MCF 10A (cell line): ENCODE measurements at regions of chr5 and their contacts with region 1.

Region 1: DNA sequence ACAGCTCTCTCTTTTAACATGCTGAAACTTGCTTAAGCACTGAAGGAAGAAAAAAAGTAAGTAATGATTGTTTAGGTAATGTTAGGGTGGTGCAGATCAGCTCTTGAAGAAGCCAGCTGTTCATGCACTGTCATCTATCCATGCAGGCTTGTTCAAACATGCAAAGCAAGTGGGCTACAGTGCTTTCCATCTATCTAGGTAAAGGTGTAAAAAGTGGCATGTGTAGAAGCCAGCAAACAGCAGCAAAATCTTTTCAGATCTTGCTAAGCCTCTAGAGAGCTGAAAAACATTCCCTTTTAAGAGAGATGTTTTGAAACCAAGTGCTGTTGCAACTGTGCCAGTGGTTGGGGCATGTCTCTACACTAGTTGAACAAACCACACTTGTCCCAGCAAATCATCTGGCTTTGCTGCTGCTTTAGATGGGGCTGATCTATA is 214.4 kb downstream of the EFNA5 start:
- DNase-seq: peak; percentile 76
- H3K4me3 Mint-ChIP-seq: peak overlapping the region; percentile 6
- H3K27ac Mint-ChIP-seq: peak overlapping the region; percentile 64
- H3K4me1 Mint-ChIP-seq: peaks cover 56% of the 10 kb centered on the region
- H3K27me3 Mint-ChIP-seq: no peaks in the 10 kb centered on the region
- CTCF ChIP-seq: no peak

Region 2: GRCh38 chr5:107389130-107389774 is 67.0 kb before region 1 on chr5:
- CTCF ChIA-PET with region 1: no interaction called
- POLR2A ChIA-PET with region 1: interaction called, 25 read pairs
- intact Hi-C with region 1: no loop called
- DNase-seq: peak; percentile 67
- H3K4me3 Mint-ChIP-seq: no peak overlapping the region
- H3K27ac Mint-ChIP-seq: peak overlapping the region; percentile 75
- H3K4me1 Mint-ChIP-seq: peaks cover 45% of the 10 kb centered on the region
- H3K27me3 Mint-ChIP-seq: no peaks in the 10 kb centered on the region
- CTCF ChIP-seq: no peak

Region 3: GRCh38 chr5:107425541-107426256 is 30.6 kb before region 1 on chr5:
- CTCF ChIA-PET with region 1: interaction called, 6 read pairs
- POLR2A ChIA-PET with region 1: interaction called, 43 read pairs
- intact Hi-C with region 1: no loop called
- DNase-seq: peak; percentile 82
- H3K4me3 Mint-ChIP-seq: peak overlapping the region; percentile 40
- H3K27ac Mint-ChIP-seq: peak overlapping the region; percentile 88
- H3K4me1 Mint-ChIP-seq: peaks cover 39% of the 10 kb centered on the region
- H3K27me3 Mint-ChIP-seq: no peaks in the 10 kb centered on the region
- CTCF ChIP-seq: no peak

Region 4: GRCh38 chr5:107431998-107432397 is 24.3 kb before region 1 on chr5:
- CTCF ChIA-PET with region 1: interaction called, 7 read pairs
- POLR2A ChIA-PET with region 1: interaction called, 43 read pairs
- intact Hi-C with region 1: no loop called
- DNase-seq: peak; percentile 76
- H3K4me3 Mint-ChIP-seq: peak overlapping the region; percentile 11
- H3K27ac Mint-ChIP-seq: peak overlapping the region; percentile 79
- H3K4me1 Mint-ChIP-seq: peaks cover 49% of the 10 kb centered on the region
- H3K27me3 Mint-ChIP-seq: no peaks in the 10 kb centered on the region
- CTCF ChIP-seq: no peak

Region 5: GRCh38 chr5:107444300-107444699 is 12.0 kb before region 1 on chr5:
- CTCF ChIA-PET with region 1: interaction called, 5 read pairs
- POLR2A ChIA-PET with region 1: interaction called, 26 read pairs
- intact Hi-C with region 1: no loop called
- DNase-seq: no peak
- H3K4me3 Mint-ChIP-seq: no peak overlapping the region
- H3K27ac Mint-ChIP-seq: no peak overlapping the region
- H3K4me1 Mint-ChIP-seq: peaks cover 14% of the 10 kb centered on the region
- H3K27me3 Mint-ChIP-seq: no peaks in the 10 kb centered on the region
- CTCF ChIP-seq: no peak

Region 6: DNA sequence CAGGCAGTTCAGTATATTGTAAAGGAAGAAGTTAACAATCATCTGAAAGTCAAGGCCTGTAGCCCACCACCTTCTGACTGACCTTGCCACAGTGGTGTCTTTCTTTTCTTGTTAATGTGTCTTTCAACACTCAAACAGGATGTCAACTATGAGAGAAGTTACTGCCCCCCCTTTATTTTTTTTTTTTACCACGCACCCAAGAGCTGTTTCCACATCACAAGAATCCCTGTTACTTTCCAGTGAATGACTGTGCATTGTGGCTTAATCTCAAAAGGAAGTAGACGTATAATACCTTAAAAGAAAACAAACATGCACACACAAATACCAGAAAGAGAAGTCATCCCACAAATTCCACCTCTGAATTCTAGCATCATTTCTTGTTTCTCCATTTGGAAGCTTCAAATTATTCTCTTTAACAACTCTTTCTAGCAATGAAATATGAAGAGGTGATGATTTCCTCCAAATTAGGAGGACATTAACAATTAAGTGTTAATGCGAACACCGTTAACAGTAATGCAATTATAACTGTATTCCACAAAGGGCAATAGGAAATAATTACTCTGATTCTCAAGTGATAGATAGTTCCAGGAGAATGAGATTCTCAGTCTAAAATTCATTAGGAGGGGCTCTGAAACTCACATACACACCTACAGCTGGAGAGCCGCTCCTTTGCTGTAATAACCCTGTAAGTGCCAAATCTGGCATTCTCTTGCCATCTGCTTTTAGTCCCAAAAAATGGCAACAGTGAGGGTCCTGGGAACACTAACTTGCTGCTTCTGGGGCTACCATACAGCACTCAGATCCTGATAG is 13.4 kb after region 1 on chr5:
- CTCF ChIA-PET with region 1: interaction called, 11 read pairs
- POLR2A ChIA-PET with region 1: interaction called, 59 read pairs
- intact Hi-C with region 1: no loop called
- DNase-seq: peak; percentile 94
- H3K4me3 Mint-ChIP-seq: peak overlapping the region; percentile 47
- H3K27ac Mint-ChIP-seq: peak overlapping the region; percentile 93
- H3K4me1 Mint-ChIP-seq: peaks cover 77% of the 10 kb centered on the region
- H3K27me3 Mint-ChIP-seq: no peaks in the 10 kb centered on the region
- CTCF ChIP-seq: no peak

Region 7: GRCh38 chr5:107501965-107502675 is 45.8 kb after region 1 on chr5:
- CTCF ChIA-PET with region 1: no interaction called
- POLR2A ChIA-PET with region 1: no interaction called
- intact Hi-C with region 1: no loop called
- DNase-seq: peak; percentile 37
- H3K4me3 Mint-ChIP-seq: no peak overlapping the region
- H3K27ac Mint-ChIP-seq: no peak overlapping the region
- H3K4me1 Mint-ChIP-seq: peaks cover 37% of the 10 kb centered on the region
- H3K27me3 Mint-ChIP-seq: no peaks in the 10 kb centered on the region
- CTCF ChIP-seq: no peak